ENCODE measurements at regions of chr12 and their contacts with region 1.

Region 1: GRCh38 chr12:96985480-96986362 is 78.7 kb downstream of the NEDD1 start:
- DNase-seq: peak; percentile 8 to 19
- ATAC-seq: peak; percentile 71 to 92
- H3K4me3 ChIP-seq: peak overlapping the region; percentile 28; the same call in 2 of the 3 replicates
- H3K27ac ChIP-seq: no peak overlapping the region
- H3K4me1 ChIP-seq: peaks cover 5% of the 10 kb centered on the region; the same call in 1 of the 3 replicates
- CTCF ChIP-seq: peak; percentile 91
- EP300 ChIP-seq: no peak
- POLR2A ChIP-seq: no peak
- RAD21 ChIP-seq: peak; percentile 60 to 74

Region 2: DNA sequence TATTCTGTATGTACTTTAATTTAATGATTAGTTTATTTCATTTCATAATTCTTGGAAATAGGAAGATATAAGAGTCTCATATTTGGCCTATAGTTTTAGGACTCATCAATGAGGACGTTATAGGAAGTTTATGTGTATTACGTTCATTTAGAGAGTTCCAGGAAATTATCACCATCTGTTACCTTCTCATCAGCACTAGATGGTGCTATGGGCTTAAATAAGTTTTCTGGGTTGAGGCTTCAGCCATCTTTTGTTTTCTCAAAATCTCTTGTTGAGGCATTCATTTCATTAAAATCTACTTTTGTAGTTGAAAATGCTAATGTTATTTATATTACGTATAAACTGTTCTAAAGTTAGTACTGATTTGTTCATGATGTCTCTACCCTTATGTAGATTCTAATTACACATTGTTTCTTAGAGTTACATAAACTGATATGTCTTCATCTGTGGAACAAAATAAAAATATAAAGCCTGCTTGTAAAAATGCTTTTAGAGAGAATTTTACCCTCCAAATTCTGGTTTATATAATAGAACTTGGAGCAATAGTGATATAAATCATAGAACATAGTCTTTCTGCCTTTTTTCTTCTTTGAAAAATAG is 407.1 kb before region 1 on chr12:
- CTCF ChIA-PET with region 1: interaction called, 30 read pairs
- POLR2A ChIA-PET with region 1: no interaction called
- DNase-seq: peak; percentile 48 to 66
- ATAC-seq: peak; percentile 90 to 93
- H3K4me3 ChIP-seq: no peak overlapping the region
- H3K27ac ChIP-seq: no peak overlapping the region
- H3K4me1 ChIP-seq: no peaks in the 10 kb centered on the region
- CTCF ChIP-seq: peak; percentile 90
- EP300 ChIP-seq: no peak
- POLR2A ChIP-seq: no peak
- RAD21 ChIP-seq: peak; percentile 89

Region 3: GRCh38 chr12:96590970-96591369 is 394.8 kb before region 1 on chr12:
- CTCF ChIA-PET with region 1: no interaction called
- POLR2A ChIA-PET with region 1: no interaction called
- DNase-seq: no peak
- ATAC-seq: no peak
- H3K4me3 ChIP-seq: no peak overlapping the region
- H3K27ac ChIP-seq: no peak overlapping the region
- H3K4me1 ChIP-seq: no peaks in the 10 kb centered on the region
- CTCF ChIP-seq: no peak
- EP300 ChIP-seq: no peak
- POLR2A ChIP-seq: no peak
- RAD21 ChIP-seq: no peak

Region 4: GRCh38 chr12:97308576-97309198 is 323.0 kb after region 1 on chr12:
- CTCF ChIA-PET with region 1: interaction called, 10 read pairs
- POLR2A ChIA-PET with region 1: no interaction called
- DNase-seq: peak; percentile 5 to 68
- ATAC-seq: peak in 1 of 2 experiments; percentile 59; a peak in 2 of 6 replicates
- H3K4me3 ChIP-seq: no peak overlapping the region
- H3K27ac ChIP-seq: no peak overlapping the region
- H3K4me1 ChIP-seq: no peaks in the 10 kb centered on the region
- CTCF ChIP-seq: peak; percentile 68
- EP300 ChIP-seq: no peak
- POLR2A ChIP-seq: no peak
- RAD21 ChIP-seq: peak; percentile 43 to 56

Measured in A549 (cell line).